HCT116 (cell line): ENCODE measurements at regions of chr5 and their contacts with region 1.

Region 1: GRCh38 chr5:58498340-58498942 is 7.2 kb downstream of the GAPT start:
- DNase-seq: peak; percentile 15
- ATAC-seq: peak; percentile 68
- H3K4me3 ChIP-seq: no peak overlapping the region
- H3K27ac ChIP-seq: no peak overlapping the region
- H3K4me1 ChIP-seq: no peaks in the 10 kb centered on the region
- H3K27me3 ChIP-seq: peaks cover 13% of the 10 kb centered on the region; the same call in 1 of the 2 replicates
- CTCF ChIP-seq: peak; percentile 57 to 82 (median 80)
- POLR2A ChIP-seq: no peak
- RAD21 ChIP-seq: peak; percentile 68

Region 2: DNA sequence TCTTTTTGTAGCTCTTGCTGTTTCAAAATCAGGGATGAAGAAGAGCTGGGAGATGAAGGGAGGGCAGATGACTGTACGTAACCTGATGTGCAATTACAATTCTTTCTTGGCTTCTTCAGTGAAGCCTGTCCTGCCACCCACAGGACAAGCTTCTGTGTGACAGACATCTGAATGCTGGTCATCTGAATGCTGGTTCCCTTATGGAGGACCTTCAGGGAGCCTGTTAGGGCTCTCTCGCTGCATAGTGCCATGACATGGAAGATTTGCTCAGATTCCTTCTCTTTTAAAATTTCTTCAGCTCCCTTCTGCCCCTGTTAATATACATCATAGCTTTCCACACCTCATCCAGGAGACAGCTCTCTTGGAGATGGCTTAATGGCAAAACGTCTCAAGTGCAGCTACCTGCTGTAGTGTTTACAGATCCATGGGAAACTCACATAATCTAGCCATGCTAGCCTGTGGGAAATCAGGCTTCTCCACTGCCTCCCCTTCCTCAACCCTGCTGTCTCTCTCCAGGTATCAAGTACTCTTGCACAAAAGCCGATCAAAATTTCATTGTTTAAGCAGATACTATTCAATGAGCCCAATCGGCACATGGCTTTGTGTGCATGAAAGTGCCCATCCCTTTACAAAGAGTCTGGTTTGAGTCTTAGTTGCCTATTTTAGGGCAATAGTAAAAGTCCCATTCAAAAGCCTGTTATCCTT is 219.0 kb after region 1 on chr5:
- CTCF ChIA-PET with region 1: no interaction called
- POLR2A ChIA-PET with region 1: no interaction called
- RAD21 ChIA-PET with region 1: no interaction called
- intact Hi-C with region 1: loop called (anchors 10 kb)
- DNase-seq: no peak
- ATAC-seq: no peak
- H3K4me3 ChIP-seq: no peak overlapping the region
- H3K27ac ChIP-seq: no peak overlapping the region
- H3K4me1 ChIP-seq: no peaks in the 10 kb centered on the region
- H3K27me3 ChIP-seq: peaks cover 4% of the 10 kb centered on the region; the same call in 1 of the 2 replicates
- CTCF ChIP-seq: no peak
- POLR2A ChIP-seq: no peak
- RAD21 ChIP-seq: no peak; the same call in 1 of the 2 replicates

Region 3: DNA sequence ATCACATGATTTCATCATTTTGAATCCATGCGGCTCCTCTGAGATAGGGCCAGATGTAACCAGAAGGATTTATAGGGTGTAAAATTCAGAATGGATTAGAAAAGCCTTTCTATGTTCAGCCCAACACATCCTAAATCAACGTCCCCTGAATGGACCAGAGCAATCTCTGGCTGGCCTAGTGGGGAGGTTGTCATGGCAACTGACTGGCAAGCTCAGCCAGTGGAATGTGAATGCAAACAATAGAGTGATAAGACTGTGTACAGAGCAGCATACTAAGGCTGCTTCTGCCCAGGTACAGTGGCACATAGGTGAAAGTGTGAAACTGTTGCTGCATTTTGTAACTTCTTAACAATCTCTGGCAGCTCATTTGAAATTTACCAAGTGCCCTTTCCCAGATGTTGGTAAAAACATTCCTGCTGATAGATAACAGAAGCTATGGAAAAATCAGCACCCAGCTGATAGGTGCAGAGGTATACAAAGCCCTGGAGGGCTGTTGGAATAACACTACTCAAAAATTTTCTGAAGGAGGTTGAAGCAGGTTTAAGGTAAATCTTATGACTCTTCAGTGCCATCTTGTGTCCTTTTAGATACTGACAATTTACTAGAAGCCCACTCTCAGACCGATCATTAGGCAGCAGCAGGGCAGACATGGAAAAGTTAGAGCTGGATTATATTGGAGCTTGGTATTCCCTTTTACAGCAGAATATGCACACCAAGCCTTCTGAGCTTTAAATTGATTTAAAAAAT is 351.7 kb after region 1 on chr5:
- CTCF ChIA-PET with region 1: interaction called, 83 read pairs
- POLR2A ChIA-PET with region 1: no interaction called
- RAD21 ChIA-PET with region 1: no interaction called
- intact Hi-C with region 1: loop called (anchors 1 kb)
- DNase-seq: peak; percentile 21
- ATAC-seq: peak; percentile 83
- H3K4me3 ChIP-seq: no peak overlapping the region
- H3K27ac ChIP-seq: no peak overlapping the region
- H3K4me1 ChIP-seq: no peaks in the 10 kb centered on the region
- H3K27me3 ChIP-seq: peaks cover 33% of the 10 kb centered on the region; the same call in 1 of the 2 replicates
- CTCF ChIP-seq: peak; percentile 23 to 52 (median 51); a peak in 4 of 6 replicates
- POLR2A ChIP-seq: no peak
- RAD21 ChIP-seq: peak; percentile 61

Region 4: DNA sequence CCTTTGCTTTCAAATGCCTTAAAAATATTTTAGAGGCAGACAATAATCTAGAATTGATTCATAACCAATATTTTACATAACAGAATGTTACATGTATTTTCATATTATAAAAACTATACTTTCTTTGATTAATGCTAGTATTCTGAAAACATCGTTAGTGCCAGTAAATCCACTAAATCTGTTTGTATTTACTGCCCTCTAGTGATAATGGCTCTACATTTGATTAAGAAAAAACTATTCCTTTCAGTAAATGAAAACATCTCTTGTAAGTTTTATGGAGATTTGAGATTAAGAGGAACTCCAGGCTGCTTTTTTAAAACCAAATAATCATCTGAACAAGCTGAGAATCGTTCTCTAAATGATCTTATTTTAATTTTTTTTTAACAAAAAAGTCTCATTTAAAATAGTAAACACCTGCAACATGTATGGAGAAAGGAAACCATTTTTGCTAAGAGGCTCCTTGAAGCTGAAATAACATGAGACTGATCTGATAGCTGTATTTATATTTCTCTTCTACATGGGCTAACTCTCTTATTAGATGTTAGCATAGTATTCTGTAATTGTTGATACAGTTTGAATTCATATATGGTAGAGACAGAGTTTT is 509.1 kb after region 1 on chr5:
- CTCF ChIA-PET with region 1: interaction called, 3 read pairs
- POLR2A ChIA-PET with region 1: no interaction called
- RAD21 ChIA-PET with region 1: no interaction called
- intact Hi-C with region 1: loop called (anchors 5 kb)
- DNase-seq: peak; percentile 10
- ATAC-seq: no peak
- H3K4me3 ChIP-seq: no peak overlapping the region
- H3K27ac ChIP-seq: no peak overlapping the region
- H3K4me1 ChIP-seq: no peaks in the 10 kb centered on the region
- H3K27me3 ChIP-seq: peaks cover 5% of the 10 kb centered on the region
- CTCF ChIP-seq: peak; percentile 32 to 53 (median 52); a peak in 4 of 6 replicates
- POLR2A ChIP-seq: no peak
- RAD21 ChIP-seq: peak; percentile 71